Activated CD8-positive, alpha-beta T cell treated with anti-CD3 and anti-CD28 coated beads for 36 hours (primary cell): ENCODE measurements at regions of chr19 and their contacts with region 1.

Region 1: GRCh38 chr19:10388957-10389356 is 8.6 kb upstream of the TYK2 start:
- DNase-seq: peak; percentile 89
- ATAC-seq: peak; percentile 48
- H3K4me3 Mint-ChIP-seq: no peak overlapping the region
- H3K27ac Mint-ChIP-seq: no peak overlapping the region
- H3K4me1 Mint-ChIP-seq: peaks cover 16% of the 10 kb centered on the region
- H3K27me3 Mint-ChIP-seq: no peaks in the 10 kb centered on the region
- CTCF ChIP-seq: peak; percentile 99

Region 2: DNA sequence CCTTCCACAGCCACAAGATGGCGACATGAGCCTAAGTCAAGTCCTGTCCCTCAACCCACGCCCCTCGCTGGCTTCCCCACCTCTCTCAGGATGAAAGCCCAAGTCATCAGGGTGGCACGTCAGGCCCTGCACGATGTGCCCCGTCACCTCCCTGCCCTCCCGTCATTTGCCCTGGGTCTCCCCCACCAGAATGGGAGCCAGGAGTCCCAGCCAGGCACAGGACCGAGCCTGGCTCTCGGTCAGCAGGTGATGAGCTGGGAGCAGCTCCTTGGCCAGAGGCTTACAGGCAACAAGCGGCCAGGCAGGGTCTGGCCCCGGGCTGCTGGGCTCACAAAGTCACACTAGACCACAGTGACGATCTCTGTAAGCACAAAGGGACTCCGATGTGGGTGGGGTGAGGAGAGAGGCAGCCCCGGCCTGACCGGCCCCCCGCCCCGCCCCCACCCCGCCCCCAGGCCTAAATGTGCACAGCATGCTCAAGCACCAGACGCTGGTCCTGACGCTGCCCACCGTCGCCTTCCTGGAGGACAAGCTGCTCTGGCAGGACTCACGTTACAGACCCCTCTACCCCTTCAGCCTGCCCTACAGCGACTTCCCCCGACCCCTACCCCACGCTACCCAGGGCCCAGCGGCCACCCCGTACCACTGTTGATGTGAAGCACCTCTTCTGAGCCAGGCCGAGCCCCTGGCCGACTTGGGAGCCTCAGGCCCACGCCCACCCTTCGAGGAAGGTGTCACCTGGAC is 129.6 kb before region 1 on chr19:
- CTCF ChIA-PET with region 1: interaction called, 286 read pairs
- POLR2A ChIA-PET with region 1: interaction called, 16 read pairs
- intact Hi-C with region 1: no loop called
- DNase-seq: peak; percentile 100
- ATAC-seq: peak; percentile 80
- H3K4me3 Mint-ChIP-seq: peak overlapping the region; percentile 24
- H3K27ac Mint-ChIP-seq: peak overlapping the region; percentile 92
- H3K4me1 Mint-ChIP-seq: peaks cover 33% of the 10 kb centered on the region
- H3K27me3 Mint-ChIP-seq: no peaks in the 10 kb centered on the region
- CTCF ChIP-seq: peak; percentile 77

Region 3: DNA sequence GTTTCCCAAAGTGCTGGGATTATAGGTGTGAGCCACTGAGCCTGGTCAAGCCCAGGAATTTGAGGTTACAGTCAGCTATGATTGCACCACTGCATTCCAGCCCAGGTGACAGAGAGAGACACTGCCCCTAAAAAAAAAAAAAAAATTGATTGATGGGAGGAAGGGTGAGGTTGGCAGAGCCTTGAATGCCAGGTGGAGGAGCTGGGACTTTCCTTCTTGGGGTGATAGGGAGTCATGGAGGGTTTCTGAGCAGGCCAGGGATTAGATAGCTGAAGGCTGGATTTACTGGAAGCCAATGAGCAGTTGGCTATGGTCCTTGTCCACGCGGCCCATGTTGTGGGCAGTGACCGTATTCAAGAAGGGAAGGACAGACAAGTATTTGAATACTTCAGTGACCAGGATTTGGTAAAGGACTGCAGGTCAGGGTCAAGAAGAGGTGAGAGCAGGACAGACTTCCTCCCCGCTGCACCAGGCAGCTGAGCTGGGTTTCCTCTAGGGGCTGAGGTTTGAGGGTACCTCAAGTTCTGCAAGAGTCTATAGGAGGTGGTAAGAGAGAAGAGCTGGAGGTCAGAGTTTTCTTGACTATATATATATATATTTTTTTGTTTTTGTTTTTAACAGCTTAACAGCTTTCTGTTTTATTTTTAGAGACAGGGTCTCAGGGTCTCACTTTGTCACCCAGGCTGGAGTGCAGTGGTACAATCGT is 109.1 kb before region 1 on chr19:
- CTCF ChIA-PET with region 1: interaction called, 24 read pairs
- POLR2A ChIA-PET with region 1: interaction called, 6 read pairs
- intact Hi-C with region 1: no loop called
- DNase-seq: no peak
- ATAC-seq: no peak
- H3K4me3 Mint-ChIP-seq: no peak overlapping the region
- H3K27ac Mint-ChIP-seq: peak overlapping the region; percentile 34
- H3K4me1 Mint-ChIP-seq: peaks cover 16% of the 10 kb centered on the region
- H3K27me3 Mint-ChIP-seq: no peaks in the 10 kb centered on the region
- CTCF ChIP-seq: no peak

Region 4: DNA sequence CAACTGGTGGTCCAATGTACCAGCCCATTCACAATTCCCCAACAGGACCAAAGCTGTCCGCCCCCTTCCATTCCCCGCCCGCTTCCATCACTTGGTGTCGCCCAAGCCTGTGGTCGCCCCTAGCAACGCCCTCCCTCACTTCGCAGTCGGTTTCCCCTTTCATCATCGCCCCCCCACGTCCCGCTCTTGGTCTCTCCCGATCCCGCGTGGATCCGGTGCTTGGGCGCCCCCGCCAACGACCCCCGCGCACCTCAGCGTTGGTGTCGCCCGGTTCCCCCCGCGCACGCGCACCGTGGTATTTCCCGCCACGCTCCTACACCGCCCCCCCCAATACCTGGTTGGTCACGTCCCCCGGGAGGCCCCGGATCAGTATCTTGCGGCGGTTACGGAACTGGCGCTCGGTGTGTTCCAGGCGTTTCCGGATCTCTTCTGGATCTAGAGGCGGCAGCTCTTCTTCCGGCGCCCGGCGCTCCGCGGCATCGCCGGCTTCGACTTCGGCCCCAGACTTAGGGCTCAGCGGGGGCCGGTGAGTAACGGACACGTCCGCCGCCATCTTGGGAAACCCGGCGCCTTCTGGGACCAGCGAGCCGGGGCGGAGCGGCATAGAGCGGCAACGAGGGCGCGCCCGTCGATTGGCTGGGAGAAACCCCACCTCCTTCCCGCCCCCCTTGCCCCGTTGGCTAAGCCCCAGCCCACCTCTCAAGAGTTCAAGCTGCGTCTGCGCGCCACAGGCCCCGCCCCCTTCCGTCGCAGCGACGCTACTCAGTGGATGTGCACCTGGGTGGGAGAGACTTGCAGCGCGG is 55.8 kb before region 1 on chr19 and contains the start of gene RAVER1:
- CTCF ChIA-PET with region 1: interaction called, 10 read pairs
- POLR2A ChIA-PET with region 1: interaction called, 3 read pairs
- intact Hi-C with region 1: loop called (anchors 10 kb)
- DNase-seq: peak; percentile 99
- ATAC-seq: peak; percentile 97
- H3K4me3 Mint-ChIP-seq: peak within 1 kb of the TSS; percentile 97
- H3K27ac Mint-ChIP-seq: peak within 1 kb of the TSS; percentile 98
- H3K4me1 Mint-ChIP-seq: peaks cover 38% of the 10 kb centered on the region
- H3K27me3 Mint-ChIP-seq: no peaks in the 10 kb centered on the region
- CTCF ChIP-seq: no peak
- total RNA-seq, gene RAVER1: 105 to 111 TPM

Region 5: GRCh38 chr19:10403137-10404021 is 14.4 kb after region 1 on chr19 and contains the start of gene CDC37:
- CTCF ChIA-PET with region 1: interaction called, 36 read pairs
- POLR2A ChIA-PET with region 1: interaction called, 3 read pairs
- intact Hi-C with region 1: no loop called
- DNase-seq: peak; percentile 99
- ATAC-seq: peak; percentile 74
- H3K4me3 Mint-ChIP-seq: peak within 1 kb of the TSS; percentile 95
- H3K27ac Mint-ChIP-seq: peak within 1 kb of the TSS; percentile 78
- H3K4me1 Mint-ChIP-seq: peaks cover 63% of the 10 kb centered on the region
- H3K27me3 Mint-ChIP-seq: no peaks in the 10 kb centered on the region
- CTCF ChIP-seq: no peak
- total RNA-seq, gene CDC37: 236 to 238 TPM